MCF 10A (cell line): ENCODE measurements at regions of chr3 and their contacts with region 1.

Region 1: GRCh38 chr3:102229062-102229655 is 205.7 kb upstream of the ZPLD1 start:
- DNase-seq: peak; percentile 84
- H3K4me3 Mint-ChIP-seq: no peak overlapping the region
- H3K27ac Mint-ChIP-seq: no peak overlapping the region
- H3K4me1 Mint-ChIP-seq: peaks cover 5% of the 10 kb centered on the region
- H3K27me3 Mint-ChIP-seq: no peaks in the 10 kb centered on the region
- CTCF ChIP-seq: peak; percentile 92

Region 2: GRCh38 chr3:101803173-101803782 is 425.9 kb before region 1 on chr3:
- CTCF ChIA-PET with region 1: interaction called, 795 read pairs
- POLR2A ChIA-PET with region 1: interaction called, 12 read pairs
- intact Hi-C with region 1: no loop called
- DNase-seq: peak; percentile 87
- H3K4me3 Mint-ChIP-seq: no peak overlapping the region
- H3K27ac Mint-ChIP-seq: no peak overlapping the region
- H3K4me1 Mint-ChIP-seq: no peaks in the 10 kb centered on the region
- H3K27me3 Mint-ChIP-seq: no peaks in the 10 kb centered on the region
- CTCF ChIP-seq: peak; percentile 69

Region 3: DNA sequence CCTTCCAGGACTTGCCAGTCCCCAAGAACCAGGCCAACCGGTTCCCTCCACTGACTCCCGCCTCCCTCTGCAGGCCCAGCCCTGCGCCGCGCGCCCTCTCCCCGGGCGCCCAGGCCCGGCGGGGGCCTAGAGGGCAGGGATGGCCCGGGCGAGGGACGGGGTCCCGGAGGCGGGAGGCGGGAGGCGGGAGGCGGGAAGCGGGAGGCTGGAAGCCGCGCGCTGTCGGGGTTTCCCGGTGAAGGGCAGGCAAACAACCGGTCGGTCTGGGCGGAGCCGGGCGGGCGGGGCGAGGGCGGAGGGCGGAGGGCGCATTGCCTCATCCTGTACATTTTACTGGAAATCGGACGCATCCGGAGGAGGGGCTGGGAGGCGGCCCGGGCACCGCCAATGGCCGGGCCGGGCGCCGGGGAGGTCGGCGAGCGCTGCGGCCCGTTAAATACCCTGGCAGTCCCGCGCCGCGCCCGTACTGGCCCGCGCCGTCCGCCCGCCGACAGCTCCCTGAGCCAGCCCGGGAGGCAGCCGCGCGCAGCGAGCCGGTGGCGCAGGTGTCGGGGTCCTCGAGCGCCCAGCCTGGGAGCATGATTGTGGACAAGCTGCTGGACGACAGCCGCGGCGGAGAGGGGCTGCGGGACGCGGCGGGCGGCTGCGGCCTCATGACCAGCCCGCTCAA is 380.0 kb before region 1 on chr3 and contains the start of gene NFKBIZ:
- CTCF ChIA-PET with region 1: interaction called, 21 read pairs
- POLR2A ChIA-PET with region 1: interaction called, 17 read pairs
- intact Hi-C with region 1: loop called (anchors 1 kb)
- DNase-seq: peak; percentile 93
- H3K4me3 Mint-ChIP-seq: peak within 1 kb of the TSS; percentile 94
- H3K27ac Mint-ChIP-seq: peak within 1 kb of the TSS; percentile 99
- H3K4me1 Mint-ChIP-seq: peaks cover 35% of the 10 kb centered on the region
- H3K27me3 Mint-ChIP-seq: no peaks in the 10 kb centered on the region
- CTCF ChIP-seq: no peak
- total RNA-seq, gene NFKBIZ: 48.9 and 58.8 TPM in 2 replicates

Region 4: GRCh38 chr3:102124301-102125158 is 104.6 kb before region 1 on chr3:
- CTCF ChIA-PET with region 1: interaction called, 11 read pairs
- POLR2A ChIA-PET with region 1: interaction called, 4 read pairs
- intact Hi-C with region 1: loop called (anchors 1 kb)
- DNase-seq: peak; percentile 83
- H3K4me3 Mint-ChIP-seq: peak overlapping the region; percentile 13
- H3K27ac Mint-ChIP-seq: peak overlapping the region; percentile 98
- H3K4me1 Mint-ChIP-seq: peaks cover 24% of the 10 kb centered on the region
- H3K27me3 Mint-ChIP-seq: no peaks in the 10 kb centered on the region
- CTCF ChIP-seq: no peak

Region 5: DNA sequence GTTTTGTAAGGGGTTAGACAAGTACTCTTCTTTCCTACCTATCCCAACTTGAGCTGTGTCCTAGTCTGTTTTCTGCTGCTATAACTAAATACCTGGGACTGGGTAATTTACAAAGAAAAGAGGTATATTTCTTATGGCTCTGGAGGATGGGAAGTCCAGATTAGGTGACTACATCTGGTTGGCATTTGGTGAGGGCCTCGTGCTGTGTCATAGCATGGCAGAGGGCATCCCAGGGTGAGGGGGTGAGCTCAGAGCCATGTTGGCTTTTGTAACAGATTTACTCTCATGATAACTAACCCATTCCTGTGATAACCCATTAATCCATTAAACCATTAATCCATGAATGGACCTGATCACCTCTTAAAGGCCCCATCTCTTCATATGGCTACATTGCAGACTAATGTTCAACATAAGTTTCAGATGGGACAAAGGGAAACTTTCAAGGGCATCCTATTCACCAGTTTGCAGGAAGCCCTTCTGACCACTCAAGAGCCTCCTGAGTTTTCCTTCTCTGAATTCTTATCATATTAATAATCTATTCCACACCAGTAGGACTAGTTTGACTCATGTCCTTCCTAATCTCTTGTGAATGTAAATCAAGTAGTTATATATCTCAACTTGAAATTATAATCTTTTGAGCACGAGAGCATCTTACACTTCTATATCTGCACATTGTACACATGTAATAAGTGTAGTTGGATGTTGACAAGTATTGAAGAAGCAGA is 20.0 kb after region 1 on chr3:
- CTCF ChIA-PET with region 1: interaction called, 10 read pairs
- POLR2A ChIA-PET with region 1: no interaction called
- intact Hi-C with region 1: no loop called
- DNase-seq: no peak
- H3K4me3 Mint-ChIP-seq: no peak overlapping the region
- H3K27ac Mint-ChIP-seq: no peak overlapping the region
- H3K4me1 Mint-ChIP-seq: no peaks in the 10 kb centered on the region
- H3K27me3 Mint-ChIP-seq: no peaks in the 10 kb centered on the region
- CTCF ChIP-seq: no peak

Region 6: DNA sequence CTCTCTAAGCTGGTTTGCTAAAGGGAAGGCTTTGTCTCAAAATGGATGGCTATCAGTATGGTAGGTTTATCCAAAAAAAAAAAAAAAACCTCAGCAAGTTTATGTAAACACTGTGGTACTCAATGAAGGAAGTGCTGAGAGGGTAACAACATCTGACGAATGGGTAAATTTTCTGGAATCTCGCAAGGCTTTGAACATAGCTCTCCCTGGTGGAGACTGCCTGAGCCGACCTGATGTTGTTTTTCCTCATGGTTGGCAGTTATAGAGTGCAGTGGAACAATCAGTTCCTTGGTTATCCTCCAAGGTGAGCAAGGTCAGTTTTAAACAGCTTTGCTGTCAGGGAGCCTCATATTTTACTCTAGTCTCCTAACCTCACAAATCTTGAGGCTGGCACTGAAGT is 300.3 kb after region 1 on chr3:
- CTCF ChIA-PET with region 1: interaction called, 672 read pairs
- POLR2A ChIA-PET with region 1: interaction called, 7 read pairs
- intact Hi-C with region 1: loop called (anchors 1 kb)
- DNase-seq: peak; percentile 54
- H3K4me3 Mint-ChIP-seq: no peak overlapping the region
- H3K27ac Mint-ChIP-seq: no peak overlapping the region
- H3K4me1 Mint-ChIP-seq: peaks cover 13% of the 10 kb centered on the region
- H3K27me3 Mint-ChIP-seq: no peaks in the 10 kb centered on the region
- CTCF ChIP-seq: peak; percentile 25

Region 7: DNA sequence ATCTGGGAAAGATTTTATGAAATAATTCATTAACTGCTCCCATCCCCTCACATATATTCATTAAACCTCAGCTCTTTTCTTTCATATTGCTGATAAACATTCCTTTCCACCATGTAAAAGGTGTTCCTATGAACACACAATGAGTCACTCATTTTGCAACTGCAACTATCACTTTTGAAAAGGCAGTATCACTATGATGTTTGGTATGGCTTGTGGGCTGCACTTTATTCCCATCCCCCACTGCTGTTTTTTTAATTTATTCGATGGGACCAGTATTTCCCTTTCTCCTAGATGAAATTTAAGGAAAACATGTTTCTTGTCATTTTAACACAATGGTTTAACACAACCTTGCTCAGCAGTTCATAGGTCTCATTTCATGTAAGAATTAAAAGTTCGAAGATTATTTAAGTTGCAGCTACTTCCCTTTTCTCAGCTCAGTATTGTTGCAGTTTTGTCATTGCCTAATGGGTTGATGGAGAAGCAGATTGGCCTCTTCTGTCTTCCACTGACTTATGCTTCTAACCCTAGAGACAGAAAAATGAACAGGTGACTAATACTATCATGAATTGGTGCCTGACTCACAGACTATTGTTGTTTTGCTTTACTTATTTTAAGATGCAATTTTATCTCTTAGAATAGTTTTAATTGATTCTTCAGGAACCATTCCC is 486.0 kb after region 1 on chr3:
- CTCF ChIA-PET with region 1: no interaction called
- POLR2A ChIA-PET with region 1: no interaction called
- intact Hi-C with region 1: no loop called
- DNase-seq: peak; percentile 60
- H3K4me3 Mint-ChIP-seq: no peak overlapping the region
- H3K27ac Mint-ChIP-seq: no peak overlapping the region
- H3K4me1 Mint-ChIP-seq: peaks cover 12% of the 10 kb centered on the region
- H3K27me3 Mint-ChIP-seq: peaks cover 53% of the 10 kb centered on the region
- CTCF ChIP-seq: no peak

Region 8: DNA sequence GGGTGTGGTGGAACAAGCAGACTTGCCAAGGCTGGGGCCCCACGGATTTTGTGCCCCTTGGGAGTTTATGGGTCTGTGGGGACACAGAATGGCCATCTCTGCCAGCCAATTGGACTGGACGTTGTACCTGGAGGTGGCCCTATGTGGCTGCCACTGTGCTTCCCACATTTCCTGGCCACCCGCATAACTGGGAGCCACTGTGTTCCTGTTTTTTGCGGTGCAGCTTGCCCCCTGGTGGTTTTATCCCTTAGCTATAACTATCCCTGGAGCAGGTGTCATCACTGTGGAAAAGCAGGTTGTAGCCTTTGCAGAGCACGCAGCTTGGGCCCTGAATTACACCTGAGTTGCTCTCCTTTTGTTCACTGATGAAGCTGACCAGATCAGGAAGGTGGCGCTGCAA is 511.9 kb after region 1 on chr3:
- CTCF ChIA-PET with region 1: no interaction called
- POLR2A ChIA-PET with region 1: no interaction called
- intact Hi-C with region 1: loop called (anchors 2 kb)
- DNase-seq: peak; percentile 23
- H3K4me3 Mint-ChIP-seq: no peak overlapping the region
- H3K27ac Mint-ChIP-seq: no peak overlapping the region
- H3K4me1 Mint-ChIP-seq: no peaks in the 10 kb centered on the region
- H3K27me3 Mint-ChIP-seq: peaks cover 29% of the 10 kb centered on the region
- CTCF ChIP-seq: peak; percentile 15

Region 9: DNA sequence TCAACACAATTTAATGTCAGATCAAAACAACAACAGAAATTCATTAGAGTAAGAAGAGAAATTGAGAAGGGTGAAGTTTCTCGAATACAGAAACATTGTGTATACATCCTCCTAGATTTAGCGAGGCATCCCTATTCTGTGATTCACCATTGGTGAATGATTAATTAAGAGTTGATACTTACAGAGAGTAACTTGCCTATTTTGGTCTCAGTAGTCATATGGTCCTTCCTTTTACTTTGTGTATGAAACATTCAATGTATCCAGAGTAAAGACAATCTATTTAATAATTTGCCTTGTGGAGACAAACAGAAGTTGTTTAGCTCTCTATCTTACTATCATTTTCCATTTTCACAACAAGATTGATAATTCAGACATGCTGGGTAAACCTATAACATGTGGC is 637.7 kb after region 1 on chr3:
- CTCF ChIA-PET with region 1: no interaction called
- POLR2A ChIA-PET with region 1: no interaction called
- intact Hi-C with region 1: no loop called
- DNase-seq: no peak
- H3K4me3 Mint-ChIP-seq: no peak overlapping the region
- H3K27ac Mint-ChIP-seq: no peak overlapping the region
- H3K4me1 Mint-ChIP-seq: no peaks in the 10 kb centered on the region
- H3K27me3 Mint-ChIP-seq: peaks cover 51% of the 10 kb centered on the region
- CTCF ChIP-seq: no peak